Vagina (tissue), 2 donors: ENCODE measurements at regions of chr5 and their contacts with region 1.

Region 1: GRCh38 chr5:6632917-6633468 is at the starts of genes NSUN2 and SRD5A1:
- DNase-seq: peak in 1 of 2 donors; percentile 95
- H3K4me3 ChIP-seq: peak within 1 kb of the TSS; percentile 72 to 81
- H3K27ac ChIP-seq: peak within 1 kb of the TSS; percentile 89
- H3K4me1 ChIP-seq: peaks cover 54% of the 10 kb centered on the region
- H3K27me3 ChIP-seq: no peaks in the 10 kb centered on the region
- CTCF ChIP-seq: no peak
- POLR2A ChIP-seq: peak in 1 of 2 donors; percentile 66
- total RNA-seq, gene NSUN2: 43.2 TPM
- total RNA-seq, gene SRD5A1: 45.4 TPM

Region 2: DNA sequence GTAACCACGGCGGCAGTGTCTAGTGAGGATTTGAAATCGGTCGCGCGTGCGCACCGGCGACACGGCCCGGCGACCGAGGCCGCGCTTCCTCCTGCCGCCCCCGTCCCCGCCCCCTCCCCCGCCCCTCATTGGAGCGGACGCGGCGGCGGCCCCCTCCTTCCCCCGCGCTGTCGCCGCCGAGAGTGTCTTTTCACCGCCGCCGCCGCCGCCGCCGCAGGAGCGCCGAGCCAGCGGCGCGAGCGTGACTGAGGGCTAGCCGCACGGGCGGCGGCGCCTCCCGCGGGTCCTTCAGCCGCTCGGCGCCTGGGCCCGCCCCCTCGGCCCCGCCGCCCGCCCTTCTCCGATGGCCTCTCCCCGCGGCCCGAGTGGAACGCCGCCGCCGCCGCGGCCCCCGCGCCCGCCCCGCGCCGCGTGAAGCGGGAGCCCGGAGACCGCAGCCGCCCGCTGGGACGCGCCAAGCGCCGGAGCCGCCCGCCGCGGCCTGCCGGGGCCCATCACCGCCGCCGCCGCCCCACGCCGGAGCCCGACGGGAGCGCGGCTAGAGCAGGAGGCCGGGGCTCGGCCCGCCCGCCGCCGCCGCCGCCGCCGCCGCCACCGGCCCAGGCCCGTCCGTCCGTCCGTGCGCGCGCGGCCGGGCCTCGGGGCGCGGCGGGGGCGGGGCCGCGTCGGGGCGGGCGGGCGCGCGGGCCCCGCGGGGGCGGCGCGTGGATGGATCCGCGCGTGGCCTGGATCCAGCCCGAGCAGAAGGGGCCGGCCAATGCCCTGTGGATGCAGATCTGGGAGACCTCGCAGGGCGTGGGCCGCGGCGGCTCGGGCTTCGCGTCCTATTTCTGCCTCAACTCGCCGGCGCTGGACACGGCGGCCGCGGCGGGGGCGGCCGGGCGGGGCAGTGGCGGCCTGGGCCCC is 80.5 kb after region 1 on chr5 and contains the start of gene TENT4A:
- intact Hi-C with region 1: loop called (anchors 1 kb)
- DNase-seq: peak in 1 of 2 donors; percentile 31
- H3K4me3 ChIP-seq: peak within 1 kb of the TSS; percentile 74 to 90
- H3K27ac ChIP-seq: peak within 1 kb of the TSS; percentile 96
- H3K4me1 ChIP-seq: peaks cover 48% of the 10 kb centered on the region
- H3K27me3 ChIP-seq: no peaks in the 10 kb centered on the region
- CTCF ChIP-seq: no peak
- POLR2A ChIP-seq: peak in 1 of 2 donors; percentile 36
- total RNA-seq, gene TENT4A: 38.1 TPM